CD4-positive, alpha-beta memory T cell (primary cell): ENCODE measurements at regions of chr17 and their contacts with region 1.

Region 1: DNA sequence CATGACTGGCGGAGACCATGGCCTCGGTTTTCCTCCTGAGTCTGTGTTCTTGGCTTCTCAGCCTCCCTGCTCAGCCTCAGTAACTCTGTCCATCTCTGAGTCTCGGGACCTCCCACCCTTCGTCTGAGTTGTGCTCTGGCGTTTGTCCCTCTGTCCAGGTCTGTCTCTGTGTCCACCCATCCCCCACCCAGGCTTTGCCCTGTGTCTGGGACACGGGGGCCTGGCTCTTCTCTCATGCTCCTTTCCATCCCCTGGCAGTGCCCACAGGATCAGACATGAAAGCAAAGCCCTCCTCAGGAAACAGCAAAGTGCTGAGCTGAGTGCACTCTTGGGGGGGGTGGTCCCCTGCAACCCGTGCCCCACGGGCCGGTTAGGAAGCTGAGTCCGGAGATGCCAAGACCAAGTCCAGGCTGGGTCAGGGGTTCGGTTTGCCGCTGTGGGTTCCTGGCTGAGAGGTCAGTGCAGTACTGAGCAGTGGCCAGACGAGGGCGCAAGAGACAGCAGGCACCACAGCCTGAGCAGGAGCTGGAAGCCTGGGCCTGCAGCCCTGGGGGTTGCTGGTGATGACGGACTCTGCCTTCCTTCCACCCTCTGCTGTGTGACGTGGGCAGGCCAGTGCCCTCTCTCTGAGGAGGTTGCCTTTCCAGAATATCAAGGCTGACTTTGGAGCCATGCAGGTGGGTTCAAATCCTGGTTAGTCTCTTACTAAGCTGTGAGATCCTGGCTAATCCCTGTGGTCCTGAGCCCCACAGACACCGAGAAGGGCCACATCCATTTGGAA is 2.5 kb downstream of the P2RX1 start:
- DNase-seq: peak; percentile 70 to 81 (median 74)
- H3K4me3 ChIP-seq: no peak overlapping the region
- H3K4me3 Mint-ChIP-seq: peak overlapping the region in 3 of 8 donors; percentile 10 to 40 (median 29)
- H3K27ac ChIP-seq: no peak overlapping the region
- H3K27ac Mint-ChIP-seq: peak overlapping the region; percentile 64 to 88 (median 77)
- H3K4me1 ChIP-seq: peaks cover 46% of the 10 kb centered on the region
- H3K4me1 Mint-ChIP-seq: peaks cover 15 to 62% (median 39%) of the 10 kb centered on the region in 4 donors
- H3K27me3 ChIP-seq: no peaks in the 10 kb centered on the region
- H3K27me3 Mint-ChIP-seq: no peaks in the 10 kb centered on the region

Region 2: DNA sequence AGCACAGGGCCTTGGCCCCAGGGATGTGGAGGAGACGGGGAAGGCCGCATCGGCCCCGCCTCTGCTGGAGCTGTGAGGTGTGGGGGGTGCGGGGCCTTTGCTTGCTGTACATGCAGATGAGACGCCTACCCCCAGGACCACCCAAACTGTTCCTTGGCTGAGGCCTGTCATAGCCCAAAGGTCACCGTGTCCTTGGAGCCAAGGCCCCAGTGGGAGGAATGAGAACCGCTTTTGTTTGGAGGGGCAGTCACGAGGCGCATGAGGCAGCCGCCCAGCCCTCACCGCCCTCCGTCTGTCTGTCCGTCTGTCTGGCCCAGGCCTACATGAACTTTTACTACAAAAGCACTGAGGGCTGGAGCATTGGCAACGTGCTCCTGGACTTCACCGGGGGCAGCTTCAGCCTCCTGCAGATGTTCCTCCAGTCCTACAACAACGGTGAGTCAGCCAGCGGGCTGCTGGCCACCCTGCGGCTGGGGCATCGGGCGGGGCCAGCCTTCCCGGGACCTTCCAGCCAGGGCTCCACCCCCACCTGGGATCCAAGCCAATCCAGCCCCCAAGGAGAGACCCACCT is 254.1 kb before region 1 on chr17:
- CTCF ChIA-PET with region 1: no interaction called
- POLR2A ChIA-PET with region 1: no interaction called
- intact Hi-C with region 1: no loop called
- DNase-seq: no peak
- H3K4me3 ChIP-seq: no peak overlapping the region
- H3K4me3 Mint-ChIP-seq: no peak overlapping the region
- H3K27ac ChIP-seq: no peak overlapping the region
- H3K27ac Mint-ChIP-seq: no peak overlapping the region
- H3K4me1 ChIP-seq: no peaks in the 10 kb centered on the region
- H3K4me1 Mint-ChIP-seq: no peaks in the 10 kb centered on the region
- H3K27me3 ChIP-seq: no peaks in the 10 kb centered on the region
- H3K27me3 Mint-ChIP-seq: no peaks in the 10 kb centered on the region

Region 3: DNA sequence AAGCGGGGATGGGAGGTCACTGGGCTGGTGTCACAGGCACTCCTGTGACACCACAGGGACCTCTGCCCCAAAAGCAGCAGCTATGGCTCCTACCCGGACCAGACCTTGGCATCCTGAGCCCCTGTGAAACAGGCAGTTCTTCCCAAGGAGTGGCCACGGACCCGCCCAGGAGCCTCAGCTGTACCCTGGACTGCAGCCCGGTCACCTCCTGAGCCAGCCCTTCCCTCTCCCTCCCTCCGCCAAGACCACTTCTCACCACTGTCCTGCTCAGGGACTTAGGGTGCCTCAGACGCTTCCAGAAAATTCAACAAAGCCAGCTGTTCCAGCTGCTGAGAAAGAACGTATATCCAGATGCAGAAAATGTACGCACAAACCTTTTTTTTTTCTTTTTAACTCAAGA is 53.8 kb before region 1 on chr17:
- CTCF ChIA-PET with region 1: interaction called, 14 read pairs
- POLR2A ChIA-PET with region 1: no interaction called
- intact Hi-C with region 1: loop called (anchors 5 kb)
- DNase-seq: no peak
- H3K4me3 ChIP-seq: no peak overlapping the region
- H3K4me3 Mint-ChIP-seq: no peak overlapping the region
- H3K27ac ChIP-seq: no peak overlapping the region
- H3K27ac Mint-ChIP-seq: no peak overlapping the region
- H3K4me1 ChIP-seq: no peaks in the 10 kb centered on the region
- H3K4me1 Mint-ChIP-seq: no peaks in the 10 kb centered on the region
- H3K27me3 ChIP-seq: no peaks in the 10 kb centered on the region
- H3K27me3 Mint-ChIP-seq: no peaks in the 10 kb centered on the region

Region 4: DNA sequence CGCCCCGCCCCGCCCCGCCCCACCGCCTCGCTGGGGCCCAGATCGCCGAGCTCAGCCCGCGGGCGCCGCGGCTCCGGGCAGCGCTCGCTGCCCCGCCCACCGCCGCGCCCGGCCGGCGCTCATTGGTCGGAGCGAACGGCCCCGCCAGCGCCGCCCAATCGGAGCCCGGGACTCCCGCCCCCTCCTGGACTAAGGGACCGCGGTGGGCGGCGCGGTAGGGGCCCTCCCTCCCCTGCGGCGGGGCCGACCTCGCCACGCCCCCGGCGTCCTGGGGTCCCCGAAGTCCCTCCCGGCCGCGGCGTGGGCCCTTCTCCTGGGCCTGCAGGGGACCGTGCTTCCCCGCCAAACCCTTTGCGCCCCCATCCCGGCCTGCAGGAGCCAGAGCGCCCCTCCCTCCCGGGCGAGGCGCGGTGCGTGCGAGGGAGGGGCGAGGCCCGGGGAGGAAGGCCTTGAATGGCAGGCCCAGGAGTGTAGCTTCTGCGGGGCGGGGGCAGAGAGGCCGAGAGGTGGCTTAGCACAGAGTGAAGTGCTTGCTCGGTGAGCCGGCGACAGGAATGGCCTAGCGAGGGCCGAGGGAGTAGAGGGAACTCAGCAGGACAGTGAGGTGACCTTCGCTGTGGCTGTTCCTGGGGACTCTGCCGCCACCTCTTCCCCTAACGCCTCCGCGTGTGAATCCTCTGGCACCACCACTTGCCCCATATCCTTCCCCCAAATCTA is 20.6 kb before region 1 on chr17 and contains the start of gene CAMKK1:
- CTCF ChIA-PET with region 1: interaction called, 10 read pairs
- POLR2A ChIA-PET with region 1: no interaction called
- intact Hi-C with region 1: no loop called
- DNase-seq: peak; percentile 85 to 91 (median 86)
- H3K4me3 ChIP-seq: peak within 1 kb of the TSS; percentile 36 to 65
- H3K4me3 Mint-ChIP-seq: peak within 1 kb of the TSS; percentile 84 to 89 (median 87)
- H3K27ac ChIP-seq: peak within 1 kb of the TSS; percentile 55
- H3K27ac Mint-ChIP-seq: peak within 1 kb of the TSS; percentile 87 to 96 (median 91)
- H3K4me1 ChIP-seq: peaks cover 21% of the 10 kb centered on the region
- H3K4me1 Mint-ChIP-seq: peaks cover 22 to 46% (median 26%) of the 10 kb centered on the region in 4 donors
- H3K27me3 ChIP-seq: no peaks in the 10 kb centered on the region
- H3K27me3 Mint-ChIP-seq: no peaks in the 10 kb centered on the region
- total RNA-seq, gene CAMKK1: 3.5 TPM

Region 5: DNA sequence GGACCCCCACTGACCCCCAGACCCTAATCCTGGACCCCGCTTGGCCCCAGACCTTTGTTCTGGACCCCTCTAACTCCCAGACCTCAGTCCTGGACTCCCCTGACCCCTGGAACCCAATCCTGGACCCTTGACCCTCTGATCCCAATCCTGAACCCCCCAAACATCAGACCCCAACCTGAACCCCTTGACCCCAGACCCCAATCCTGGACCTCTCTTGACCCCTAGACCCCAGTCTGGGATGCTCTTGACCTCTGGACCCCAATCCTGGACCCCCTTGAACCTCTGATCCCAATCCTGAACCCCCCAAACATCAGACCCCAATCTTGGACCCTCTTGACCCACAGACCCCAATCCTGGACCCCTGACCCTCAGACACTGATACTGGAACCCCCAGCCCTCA is 16.0 kb after region 1 on chr17:
- CTCF ChIA-PET with region 1: interaction called, 15 read pairs
- POLR2A ChIA-PET with region 1: no interaction called
- intact Hi-C with region 1: no loop called
- DNase-seq: no peak
- H3K4me3 ChIP-seq: no peak overlapping the region
- H3K4me3 Mint-ChIP-seq: no peak overlapping the region
- H3K27ac ChIP-seq: peak overlapping the region; percentile 6
- H3K27ac Mint-ChIP-seq: peak overlapping the region in 2 of 7 donors; percentile 35 to 74
- H3K4me1 ChIP-seq: no peaks in the 10 kb centered on the region
- H3K4me1 Mint-ChIP-seq: peaks cover 0 to 3% (median 0%) of the 10 kb centered on the region in 4 donors
- H3K27me3 ChIP-seq: no peaks in the 10 kb centered on the region
- H3K27me3 Mint-ChIP-seq: no peaks in the 10 kb centered on the region

Region 6: GRCh38 chr17:3978421-3979279 is 64.9 kb after region 1 on chr17:
- CTCF ChIA-PET with region 1: interaction called, 12 read pairs
- POLR2A ChIA-PET with region 1: no interaction called
- intact Hi-C with region 1: no loop called
- DNase-seq: no peak
- H3K4me3 ChIP-seq: no peak overlapping the region
- H3K4me3 Mint-ChIP-seq: no peak overlapping the region
- H3K27ac ChIP-seq: no peak overlapping the region
- H3K27ac Mint-ChIP-seq: peak overlapping the region in 2 of 7 donors; percentile 7 to 17
- H3K4me1 ChIP-seq: peaks cover under 1% of the 10 kb centered on the region
- H3K4me1 Mint-ChIP-seq: peaks cover 2 to 24% (median 5%) of the 10 kb centered on the region in 4 donors
- H3K27me3 ChIP-seq: no peaks in the 10 kb centered on the region
- H3K27me3 Mint-ChIP-seq: peaks cover 0 to 2% of the 10 kb centered on the region in 2 donors

Region 7: GRCh38 chr17:4004517-4005295 is 91.0 kb after region 1 on chr17:
- CTCF ChIA-PET with region 1: interaction called, 138 read pairs
- POLR2A ChIA-PET with region 1: interaction called, 7 read pairs
- intact Hi-C with region 1: loop called (anchors 1 kb)
- DNase-seq: peak in 4 of 5 donors; percentile 52 to 65 (median 56)
- H3K4me3 ChIP-seq: no peak overlapping the region
- H3K4me3 Mint-ChIP-seq: peak overlapping the region in 1 of 8 donors; percentile 34
- H3K27ac ChIP-seq: no peak overlapping the region
- H3K27ac Mint-ChIP-seq: peak overlapping the region in 5 of 7 donors; percentile 42 to 79 (median 57)
- H3K4me1 ChIP-seq: peaks cover 8% of the 10 kb centered on the region
- H3K4me1 Mint-ChIP-seq: peaks cover 0 to 14% (median 4%) of the 10 kb centered on the region in 4 donors
- H3K27me3 ChIP-seq: no peaks in the 10 kb centered on the region
- H3K27me3 Mint-ChIP-seq: no peaks in the 10 kb centered on the region